CD8-positive, alpha-beta T cell (primary cell): ENCODE measurements at regions of chr2 and their contacts with region 1.

Region 1: DNA sequence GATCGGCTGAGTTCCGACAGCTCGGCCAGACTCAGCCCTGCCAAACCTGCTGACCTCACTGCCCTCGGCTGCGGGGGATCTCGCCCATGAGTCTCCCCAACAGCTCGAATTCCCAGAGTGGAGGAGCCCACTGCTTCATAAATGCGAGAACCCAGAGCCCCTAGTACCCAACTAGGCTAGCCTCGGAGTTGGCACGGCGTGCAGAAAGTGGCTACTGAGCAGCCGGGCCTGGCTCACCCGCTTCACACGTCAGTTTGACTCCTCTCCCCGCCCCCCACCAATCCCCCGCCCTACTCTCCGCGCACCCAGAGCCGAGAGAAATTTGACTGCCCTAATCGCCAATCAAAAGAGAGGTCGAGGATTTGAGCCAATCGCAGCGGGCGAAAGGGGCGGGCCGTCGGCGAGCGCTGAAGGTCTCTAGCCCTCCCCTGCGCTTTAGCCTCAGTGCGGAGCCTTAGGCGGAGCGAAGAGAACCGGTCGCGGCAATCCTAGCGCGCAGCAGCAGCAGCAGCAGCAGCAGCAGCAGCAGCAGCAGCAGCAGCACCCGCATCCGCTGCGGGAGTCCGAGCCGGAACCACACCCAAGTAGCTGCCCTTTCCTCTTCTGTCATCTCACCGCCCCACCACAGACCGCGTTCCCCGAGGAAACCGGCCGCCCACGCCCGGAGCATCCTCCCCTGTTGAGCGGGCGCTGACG is at the start of gene GLS:
- DNase-seq: peak; percentile 93 to 98 (median 96)
- ATAC-seq: peak; percentile 75
- H3K4me3 ChIP-seq: peak within 1 kb of the TSS; percentile 82 to 95
- H3K4me3 Mint-ChIP-seq: peak within 1 kb of the TSS; percentile 98
- H3K27ac ChIP-seq: peak within 1 kb of the TSS; percentile 93 to 94
- H3K27ac Mint-ChIP-seq: peak within 1 kb of the TSS; percentile 99
- H3K4me1 ChIP-seq: peaks cover 50% of the 10 kb centered on the region
- H3K4me1 Mint-ChIP-seq: peaks cover 50% of the 10 kb centered on the region
- H3K27me3 ChIP-seq: no peaks in the 10 kb centered on the region
- H3K27me3 Mint-ChIP-seq: no peaks in the 10 kb centered on the region
- CTCF ChIP-seq: no peak
- total RNA-seq, gene GLS: 254 to 265 TPM

Region 2: GRCh38 chr2:189440947-189441708 is 1439.4 kb before region 1 on chr2 and contains the start of gene WDR75:
- CTCF ChIA-PET with region 1: no interaction called
- POLR2A ChIA-PET with region 1: no interaction called
- intact Hi-C with region 1: loop called in 1 of 2 experiments (anchors 5 kb)
- DNase-seq: peak; percentile 85 to 97 (median 92)
- ATAC-seq: peak; percentile 94
- H3K4me3 ChIP-seq: peak within 1 kb of the TSS; percentile 71 to 92
- H3K4me3 Mint-ChIP-seq: peak within 1 kb of the TSS; percentile 100
- H3K27ac ChIP-seq: peak within 1 kb of the TSS; percentile 96 to 98
- H3K27ac Mint-ChIP-seq: peak within 1 kb of the TSS; percentile 100
- H3K4me1 ChIP-seq: peaks cover 33% of the 10 kb centered on the region
- H3K4me1 Mint-ChIP-seq: peaks cover 12% of the 10 kb centered on the region
- H3K27me3 ChIP-seq: no peaks in the 10 kb centered on the region
- H3K27me3 Mint-ChIP-seq: no peaks in the 10 kb centered on the region
- CTCF ChIP-seq: no peak
- total RNA-seq, gene WDR75: 45.0 to 52.6 TPM

Region 3: GRCh38 chr2:189783927-189784867 is 1096.3 kb before region 1 on chr2 and contains the starts of genes ORMDL1 and PMS1:
- CTCF ChIA-PET with region 1: no interaction called
- POLR2A ChIA-PET with region 1: no interaction called
- intact Hi-C with region 1: loop called in 1 of 2 experiments (anchors 2 kb)
- DNase-seq: peak; percentile 86 to 98 (median 95)
- ATAC-seq: peak; percentile 89
- H3K4me3 ChIP-seq: peak within 1 kb of the TSS; percentile 56 to 91
- H3K4me3 Mint-ChIP-seq: peak within 1 kb of the TSS; percentile 97
- H3K27ac ChIP-seq: peak within 1 kb of the TSS; percentile 96 to 97
- H3K27ac Mint-ChIP-seq: peak within 1 kb of the TSS; percentile 97
- H3K4me1 ChIP-seq: peaks cover 45% of the 10 kb centered on the region
- H3K4me1 Mint-ChIP-seq: peaks cover 65% of the 10 kb centered on the region
- H3K27me3 ChIP-seq: no peaks in the 10 kb centered on the region
- H3K27me3 Mint-ChIP-seq: no peaks in the 10 kb centered on the region
- CTCF ChIP-seq: no peak
- total RNA-seq, gene ORMDL1: 105 to 107 TPM
- total RNA-seq, gene PMS1: 12.2 to 15.1 TPM

Region 4: DNA sequence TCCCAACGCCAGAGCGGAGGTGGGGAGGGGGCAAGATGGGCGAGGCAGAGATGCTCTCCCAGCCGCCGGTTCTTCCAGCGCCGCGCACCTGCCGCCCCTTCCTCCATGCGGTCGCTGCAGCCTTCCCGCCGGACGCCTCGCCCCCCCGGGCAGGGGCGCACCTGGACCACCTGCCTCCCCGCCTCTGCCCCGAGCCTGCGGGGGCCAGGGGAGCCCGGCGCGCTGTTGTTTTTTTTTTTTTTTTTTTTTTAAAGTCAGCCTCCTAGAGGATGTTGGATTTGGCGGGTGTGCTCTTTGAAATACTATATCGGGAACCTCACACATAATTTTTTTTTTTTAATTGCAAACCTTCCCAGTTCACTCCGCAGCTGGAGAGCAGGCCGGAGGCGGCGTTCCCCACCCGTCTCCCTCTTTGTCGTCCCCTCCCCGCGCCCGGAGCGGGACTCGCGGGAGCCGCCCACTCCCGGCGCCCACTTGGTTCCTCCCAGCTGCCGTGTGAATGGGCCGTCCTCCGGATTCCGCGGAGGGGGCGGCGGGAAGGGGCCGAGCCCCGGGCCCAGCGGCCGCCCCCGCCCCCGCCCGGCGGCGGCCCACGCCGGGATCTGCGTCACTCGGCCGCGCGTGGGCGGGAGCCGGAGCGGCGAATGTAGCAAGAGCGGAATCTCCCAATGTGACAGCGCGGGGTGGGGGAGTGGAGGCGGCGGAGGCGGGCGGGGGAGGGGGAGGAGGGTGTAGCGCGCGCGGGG is 232.1 kb before region 1 on chr2:
- CTCF ChIA-PET with region 1: no interaction called
- POLR2A ChIA-PET with region 1: no interaction called
- intact Hi-C with region 1: loop called (anchors 2 to 5 kb)
- DNase-seq: peak; percentile 80 to 97 (median 88)
- ATAC-seq: peak; percentile 81
- H3K4me3 ChIP-seq: peak overlapping the region; percentile 58 to 63
- H3K4me3 Mint-ChIP-seq: peak overlapping the region; percentile 84
- H3K27ac ChIP-seq: peak overlapping the region; percentile 63 to 84
- H3K27ac Mint-ChIP-seq: peak overlapping the region; percentile 88
- H3K4me1 ChIP-seq: peaks cover 26% of the 10 kb centered on the region
- H3K4me1 Mint-ChIP-seq: peaks cover 44% of the 10 kb centered on the region
- H3K27me3 ChIP-seq: no peaks in the 10 kb centered on the region
- H3K27me3 Mint-ChIP-seq: no peaks in the 10 kb centered on the region
- CTCF ChIP-seq: no peak

Region 5: GRCh38 chr2:190707726-190708125 is 172.8 kb before region 1 on chr2:
- CTCF ChIA-PET with region 1: no interaction called
- POLR2A ChIA-PET with region 1: no interaction called
- intact Hi-C with region 1: no loop called
- DNase-seq: no peak
- ATAC-seq: no peak
- H3K4me3 ChIP-seq: no peak overlapping the region
- H3K4me3 Mint-ChIP-seq: no peak overlapping the region
- H3K27ac ChIP-seq: no peak overlapping the region
- H3K27ac Mint-ChIP-seq: no peak overlapping the region
- H3K4me1 ChIP-seq: no peaks in the 10 kb centered on the region
- H3K4me1 Mint-ChIP-seq: no peaks in the 10 kb centered on the region
- H3K27me3 ChIP-seq: no peaks in the 10 kb centered on the region
- H3K27me3 Mint-ChIP-seq: no peaks in the 10 kb centered on the region
- CTCF ChIP-seq: no peak

Region 6: GRCh38 chr2:190863946-190864345 is 16.6 kb before region 1 on chr2:
- CTCF ChIA-PET with region 1: interaction called, 3 read pairs
- POLR2A ChIA-PET with region 1: interaction called, 16 read pairs
- intact Hi-C with region 1: loop called in 1 of 2 experiments (anchors 2 kb)
- DNase-seq: no peak
- ATAC-seq: no peak
- H3K4me3 ChIP-seq: no peak overlapping the region
- H3K4me3 Mint-ChIP-seq: no peak overlapping the region
- H3K27ac ChIP-seq: no peak overlapping the region
- H3K27ac Mint-ChIP-seq: peak overlapping the region; percentile 28
- H3K4me1 ChIP-seq: peaks cover 17% of the 10 kb centered on the region
- H3K4me1 Mint-ChIP-seq: peaks cover 20% of the 10 kb centered on the region
- H3K27me3 ChIP-seq: no peaks in the 10 kb centered on the region
- H3K27me3 Mint-ChIP-seq: no peaks in the 10 kb centered on the region
- CTCF ChIP-seq: no peak

Region 7: DNA sequence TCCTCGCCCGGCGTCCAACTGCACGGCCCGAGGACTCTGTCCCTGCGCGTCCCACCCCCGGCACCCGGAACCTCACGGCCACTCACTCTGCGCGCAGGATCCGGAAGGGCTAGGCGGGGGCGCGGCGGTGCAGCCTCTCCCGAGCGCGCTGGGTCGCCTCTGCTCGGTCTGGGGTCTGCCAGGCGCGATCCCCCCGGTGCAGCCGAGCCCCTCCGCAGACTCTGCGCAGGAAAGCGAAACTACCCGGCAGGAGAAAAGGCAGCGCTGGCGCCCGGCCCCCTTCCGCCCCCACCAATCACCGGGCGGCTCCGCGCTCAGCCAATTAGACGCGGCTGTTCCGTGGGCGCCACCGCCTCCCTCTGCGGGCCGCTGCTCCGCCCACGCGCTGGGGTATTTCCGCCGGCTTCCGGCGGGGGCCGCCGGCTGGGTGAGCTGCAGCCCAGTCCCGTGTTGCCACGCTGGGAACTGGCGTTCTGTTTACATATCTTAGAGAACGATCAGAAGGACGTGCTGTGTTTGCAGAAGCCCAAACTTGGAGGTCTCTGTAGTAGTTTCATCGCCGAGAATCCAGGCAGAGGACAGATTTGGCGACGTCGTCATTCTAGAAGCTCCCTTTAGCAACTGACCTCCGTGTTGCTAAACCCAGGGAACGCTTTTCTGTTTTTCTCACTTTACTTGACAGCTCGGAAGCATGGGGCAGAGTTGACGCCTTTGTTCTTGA is 133.6 kb after region 1 on chr2 and contains the start of gene STAT1:
- CTCF ChIA-PET with region 1: no interaction called
- POLR2A ChIA-PET with region 1: interaction called, 17 read pairs
- intact Hi-C with region 1: loop called (anchors 1 to 2 kb)
- DNase-seq: peak; percentile 93 to 98 (median 96)
- ATAC-seq: peak; percentile 87
- H3K4me3 ChIP-seq: peak within 1 kb of the TSS; percentile 61 to 88
- H3K4me3 Mint-ChIP-seq: no peak within 1 kb of the TSS
- H3K27ac ChIP-seq: peak within 1 kb of the TSS; percentile 91 to 94
- H3K27ac Mint-ChIP-seq: no peak within 1 kb of the TSS
- H3K4me1 ChIP-seq: peaks cover 59% of the 10 kb centered on the region
- H3K4me1 Mint-ChIP-seq: peaks cover 44% of the 10 kb centered on the region
- H3K27me3 ChIP-seq: no peaks in the 10 kb centered on the region
- H3K27me3 Mint-ChIP-seq: no peaks in the 10 kb centered on the region
- CTCF ChIP-seq: no peak
- total RNA-seq, gene STAT1: 66.7 to 69.9 TPM

Region 8: DNA sequence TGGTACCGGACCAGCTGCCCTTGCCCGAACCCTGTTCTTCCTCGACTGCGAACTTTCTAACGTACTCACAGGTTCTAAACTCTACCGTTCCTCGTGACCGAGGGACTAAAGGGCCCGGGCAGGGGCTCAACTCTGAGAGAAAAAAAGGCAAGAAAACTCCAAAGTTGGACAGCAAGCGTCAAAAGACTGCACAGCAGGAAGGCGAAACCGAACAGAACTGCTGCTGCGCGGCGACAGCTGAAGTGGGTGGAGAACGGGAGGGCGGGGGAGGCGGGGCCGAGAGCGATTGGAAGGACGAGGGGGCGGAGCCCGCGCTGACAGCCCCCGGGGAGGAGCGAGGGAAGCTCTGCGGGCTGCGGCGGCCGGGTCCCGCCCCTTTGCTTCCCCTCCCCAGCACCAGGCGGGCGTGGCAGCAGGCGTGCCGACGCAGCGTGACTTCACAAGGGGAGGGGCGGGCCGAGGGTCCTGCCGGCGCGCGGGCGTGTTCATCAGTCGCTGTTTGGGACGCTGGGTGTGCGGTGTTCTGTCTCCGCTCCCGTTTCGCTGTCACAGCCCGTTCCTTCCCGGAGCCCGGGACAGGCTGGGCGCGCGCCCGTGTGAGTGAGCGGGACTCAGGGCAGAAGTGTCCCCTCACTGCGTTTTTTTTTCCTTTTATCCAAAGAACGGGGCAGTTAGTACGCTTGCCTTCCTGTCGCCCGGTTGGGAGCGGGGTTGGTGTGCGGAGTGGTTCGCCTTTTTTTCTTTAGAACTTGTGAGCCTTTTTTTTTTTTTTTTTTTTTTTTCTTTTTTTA is 797.3 kb after region 1 on chr2 and contains the start of gene NABP1:
- CTCF ChIA-PET with region 1: no interaction called
- POLR2A ChIA-PET with region 1: interaction called, 8 read pairs
- intact Hi-C with region 1: loop called in 1 of 2 experiments (anchors 2 kb)
- DNase-seq: peak; percentile 98 to 99 (median 99)
- ATAC-seq: peak; percentile 87
- H3K4me3 ChIP-seq: peak within 1 kb of the TSS; percentile 84 to 87
- H3K4me3 Mint-ChIP-seq: peak within 1 kb of the TSS; percentile 98
- H3K27ac ChIP-seq: peak within 1 kb of the TSS; percentile 95
- H3K27ac Mint-ChIP-seq: peak within 1 kb of the TSS; percentile 99
- H3K4me1 ChIP-seq: peaks cover 47% of the 10 kb centered on the region
- H3K4me1 Mint-ChIP-seq: peaks cover 66% of the 10 kb centered on the region
- H3K27me3 ChIP-seq: no peaks in the 10 kb centered on the region
- H3K27me3 Mint-ChIP-seq: no peaks in the 10 kb centered on the region
- CTCF ChIP-seq: no peak
- total RNA-seq, gene NABP1: 17.5 to 21.1 TPM